ENCODE measurements at regions of chr20 and their contacts with region 1.

Region 1: GRCh38 chr20:32779500-32780211 is 17.5 kb downstream of the DNMT3B start:
- DNase-seq: no peak
- H3K4me3 ChIP-seq: no peak overlapping the region
- H3K27me3 ChIP-seq: no peaks in the 10 kb centered on the region
- CTCF ChIP-seq: no peak

Region 2: DNA sequence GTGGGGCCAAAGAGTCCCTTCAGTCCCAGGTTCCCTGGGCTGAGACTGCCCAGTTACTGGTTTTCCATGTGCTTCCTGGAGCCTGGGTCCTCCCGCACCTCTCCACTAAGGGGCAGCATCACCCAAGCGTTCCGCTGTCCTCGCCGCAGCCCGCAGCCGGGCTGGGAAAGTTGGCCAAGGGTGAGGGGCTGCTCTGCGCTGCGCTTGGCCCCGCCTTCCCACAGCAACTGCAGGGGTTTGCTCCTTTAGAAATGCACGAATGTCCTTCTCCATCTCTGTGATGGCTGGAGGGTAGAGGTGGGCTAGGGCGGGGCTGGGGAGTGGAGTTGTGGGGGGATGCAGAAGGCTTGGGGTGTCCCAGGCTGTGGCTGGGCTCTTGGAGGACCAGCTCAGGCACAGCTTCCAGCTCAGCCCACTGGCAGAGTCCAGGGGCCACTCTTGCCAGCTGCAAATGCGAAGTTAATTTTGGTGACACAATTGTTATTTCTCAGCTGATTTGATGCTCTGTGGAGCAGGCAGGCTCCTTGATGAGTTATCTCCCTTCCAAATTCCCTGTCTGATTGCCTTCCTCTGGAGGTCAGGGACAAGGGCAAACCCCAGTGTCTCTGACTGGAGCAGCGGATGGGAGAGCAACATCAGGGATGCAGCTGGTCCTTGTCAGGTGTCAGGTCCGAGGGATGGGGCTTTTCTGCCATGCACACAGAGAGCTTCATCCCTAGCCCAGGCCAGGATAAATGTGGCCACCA is 257.7 kb before region 1 on chr20:
- CTCF ChIA-PET with region 1: interaction called, 32 read pairs
- POLR2A ChIA-PET with region 1: no interaction called
- DNase-seq: no peak
- H3K4me3 ChIP-seq: no peak overlapping the region
- H3K27me3 ChIP-seq: no peaks in the 10 kb centered on the region
- CTCF ChIP-seq: peak; percentile 92

Region 3: DNA sequence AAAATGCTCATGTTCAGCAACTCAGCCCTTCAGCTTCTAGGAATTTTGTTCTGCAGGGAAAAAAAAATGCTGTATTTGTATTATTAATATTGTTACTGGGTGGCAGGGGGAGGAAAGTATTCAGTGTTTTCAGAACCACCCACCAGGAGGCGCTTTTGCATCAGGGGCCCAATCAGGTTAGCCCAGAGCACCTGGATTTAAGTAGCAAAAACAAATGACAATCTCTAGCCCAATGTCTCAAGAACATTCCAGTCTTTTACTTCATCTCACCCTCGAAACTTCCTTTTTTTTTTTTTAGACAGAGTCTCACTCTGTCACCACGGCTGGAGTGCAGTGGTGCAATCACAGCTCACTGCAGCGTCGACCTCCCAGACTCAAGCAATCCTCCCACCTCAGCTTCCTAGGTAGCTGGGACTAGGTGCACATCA is 105.3 kb before region 1 on chr20:
- CTCF ChIA-PET with region 1: interaction called, 146 read pairs
- POLR2A ChIA-PET with region 1: no interaction called
- DNase-seq: no peak
- H3K4me3 ChIP-seq: no peak overlapping the region
- H3K27me3 ChIP-seq: no peaks in the 10 kb centered on the region
- CTCF ChIP-seq: peak; percentile 88

Region 4: GRCh38 chr20:32743237-32744112 is 36.2 kb before region 1 on chr20 and contains the start of gene COMMD7:
- CTCF ChIA-PET with region 1: interaction called, 11 read pairs
- POLR2A ChIA-PET with region 1: no interaction called
- DNase-seq: no peak
- H3K4me3 ChIP-seq: peak within 1 kb of the TSS; percentile 84
- H3K27me3 ChIP-seq: no peaks in the 10 kb centered on the region
- CTCF ChIP-seq: no peak
- polyA plus RNA-seq, gene COMMD7: 73.6 and 84.3 TPM in 2 replicates

Region 5: DNA sequence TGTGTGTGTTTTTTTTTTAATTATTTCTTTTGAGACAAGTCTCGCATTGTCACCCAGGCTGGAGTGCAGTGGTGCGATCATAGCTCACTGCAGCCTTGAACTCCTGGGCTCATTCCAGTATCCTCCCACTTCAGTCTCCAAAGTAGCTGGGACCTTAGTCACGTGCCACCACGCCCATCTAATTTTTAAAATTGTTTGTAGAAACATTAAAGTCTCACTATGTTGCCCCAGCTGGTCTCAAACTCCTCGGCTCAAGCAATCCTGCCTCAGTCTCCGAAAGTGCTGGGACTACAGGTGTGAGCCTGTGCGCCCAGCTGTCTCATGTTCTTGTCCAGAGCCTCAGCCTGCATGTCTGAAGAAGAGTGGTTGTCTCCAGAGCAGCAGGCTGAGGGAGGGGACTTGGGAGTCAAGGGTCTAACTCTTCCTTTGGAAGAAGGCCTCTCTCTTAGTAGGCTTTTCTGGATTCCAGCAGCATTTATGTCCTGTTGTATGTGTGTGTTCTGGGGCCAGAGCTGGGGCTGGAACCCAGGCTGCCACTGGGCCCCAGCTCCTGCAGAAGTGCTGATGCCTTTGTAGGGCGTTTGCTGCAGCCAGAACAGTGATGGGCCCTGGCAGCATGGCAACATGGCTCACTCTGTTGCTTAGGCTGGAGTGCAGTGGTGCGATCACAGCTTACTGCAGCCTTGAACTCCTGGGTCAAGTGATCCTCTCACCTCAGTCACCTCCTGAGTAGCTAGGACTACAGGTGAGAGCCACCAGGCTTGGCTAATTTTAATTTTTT is 12.0 kb before region 1 on chr20:
- CTCF ChIA-PET with region 1: interaction called, 27 read pairs
- POLR2A ChIA-PET with region 1: no interaction called
- DNase-seq: no peak
- H3K4me3 ChIP-seq: no peak overlapping the region
- H3K27me3 ChIP-seq: no peaks in the 10 kb centered on the region
- CTCF ChIP-seq: no peak